ENCODE measurements at regions of chr9 and their contacts with region 1.

Region 1: GRCh38 chr9:89764217-89764616 is 159.4 kb downstream of the GADD45G start:
- DNase-seq: no peak
- ATAC-seq: no peak
- H3K4me3 Mint-ChIP-seq: no peak overlapping the region
- H3K27ac Mint-ChIP-seq: no peak overlapping the region
- H3K4me1 Mint-ChIP-seq: no peaks in the 10 kb centered on the region
- H3K27me3 Mint-ChIP-seq: no peaks in the 10 kb centered on the region

Region 2: DNA sequence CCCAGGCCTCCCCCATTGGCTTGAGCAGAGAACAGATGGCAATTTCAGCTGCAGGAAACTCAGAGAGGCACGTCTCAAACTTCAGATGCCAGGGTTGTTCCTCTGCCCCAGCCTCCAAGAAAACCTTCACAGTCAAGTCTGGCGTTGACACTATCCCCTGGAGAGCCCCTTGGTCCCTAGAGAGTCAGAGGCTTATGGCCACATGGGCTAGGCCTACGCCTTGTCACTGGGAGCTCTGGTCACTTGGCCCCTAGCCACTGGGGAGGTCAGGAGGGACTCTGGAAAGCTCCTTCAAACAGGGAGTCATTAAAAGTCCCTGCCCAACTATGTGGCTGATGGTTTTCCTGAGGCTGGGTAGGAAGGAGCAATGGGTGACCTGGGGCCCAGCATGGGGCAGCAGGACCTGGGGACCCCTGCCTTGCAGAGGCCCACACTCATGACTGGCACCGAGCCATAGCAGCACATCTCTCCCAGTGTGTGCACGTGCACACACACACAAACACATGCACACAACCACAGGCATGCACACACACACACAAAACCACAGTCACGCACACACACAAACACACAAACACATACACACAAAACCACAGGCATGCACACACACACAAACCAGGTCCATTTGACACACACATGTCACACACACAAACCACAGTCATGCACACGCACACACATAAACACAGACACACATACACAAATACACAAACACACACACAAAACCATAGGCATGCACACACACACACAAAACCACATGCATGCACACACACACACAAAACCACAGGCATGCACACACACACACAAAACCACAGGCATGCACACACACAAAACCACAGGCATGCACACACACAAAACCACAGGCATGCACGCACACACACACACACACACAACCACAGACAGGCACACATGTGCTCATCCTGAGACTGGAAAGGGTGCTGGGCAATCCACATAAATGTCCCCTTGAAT is 15.1 kb before region 1 on chr9:
- CTCF ChIA-PET with region 1: interaction called, 5 read pairs
- POLR2A ChIA-PET with region 1: no interaction called
- intact Hi-C with region 1: loop called in 1 of 2 experiments (anchors 1 kb)
- DNase-seq: no peak
- ATAC-seq: no peak
- H3K4me3 Mint-ChIP-seq: no peak overlapping the region
- H3K27ac Mint-ChIP-seq: no peak overlapping the region
- H3K4me1 Mint-ChIP-seq: peaks cover 39% of the 10 kb centered on the region
- H3K27me3 Mint-ChIP-seq: no peaks in the 10 kb centered on the region